Activated CD4-positive, alpha-beta memory T cell treated with anti-CD3 and anti-CD28 coated beads for 36 hours (primary cell): ENCODE measurements at regions of chr6 and their contacts with region 1.

Region 1: DNA sequence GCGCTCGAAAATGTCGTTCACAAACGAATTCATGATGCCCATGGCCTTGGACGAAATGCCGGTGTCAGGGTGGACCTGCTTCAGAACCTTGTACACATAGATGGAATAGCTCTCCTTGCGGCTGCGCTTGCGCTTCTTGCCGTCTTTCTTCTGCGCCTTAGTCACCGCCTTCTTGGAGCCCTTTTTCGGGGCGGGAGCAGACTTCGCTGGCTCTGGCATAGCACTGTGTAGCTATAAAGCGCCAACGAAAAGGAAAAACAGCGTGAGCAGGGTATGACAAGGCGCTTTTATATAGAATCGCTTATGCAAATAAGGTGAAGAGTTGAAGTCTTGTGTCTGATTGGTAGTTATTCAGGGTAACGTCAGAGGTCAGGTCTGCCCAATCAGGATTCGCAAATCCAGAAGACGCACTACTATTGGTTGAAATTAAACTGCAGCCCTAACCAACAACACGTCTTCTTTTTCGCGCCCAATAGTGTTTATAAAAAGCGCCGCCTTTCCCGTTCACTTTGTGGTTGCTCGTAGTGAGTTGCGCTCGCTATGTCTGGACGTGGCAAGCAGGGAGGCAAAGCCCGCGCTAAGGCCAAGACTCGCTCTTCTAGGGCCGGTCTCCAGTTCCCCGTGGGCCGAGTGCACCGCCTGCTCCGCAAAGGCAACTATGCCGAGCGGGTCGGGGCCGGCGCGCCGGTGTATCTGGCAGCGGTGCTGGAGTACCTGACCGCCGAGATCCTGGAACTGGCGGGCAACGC is 114.8 kb upstream of the PRSS16 start:
- DNase-seq: peak; percentile 95
- H3K4me3 Mint-ChIP-seq: no peak overlapping the region
- H3K27ac Mint-ChIP-seq: no peak overlapping the region
- H3K4me1 Mint-ChIP-seq: peaks cover 16% of the 10 kb centered on the region
- H3K27me3 Mint-ChIP-seq: peaks cover 2% of the 10 kb centered on the region

Region 2: DNA sequence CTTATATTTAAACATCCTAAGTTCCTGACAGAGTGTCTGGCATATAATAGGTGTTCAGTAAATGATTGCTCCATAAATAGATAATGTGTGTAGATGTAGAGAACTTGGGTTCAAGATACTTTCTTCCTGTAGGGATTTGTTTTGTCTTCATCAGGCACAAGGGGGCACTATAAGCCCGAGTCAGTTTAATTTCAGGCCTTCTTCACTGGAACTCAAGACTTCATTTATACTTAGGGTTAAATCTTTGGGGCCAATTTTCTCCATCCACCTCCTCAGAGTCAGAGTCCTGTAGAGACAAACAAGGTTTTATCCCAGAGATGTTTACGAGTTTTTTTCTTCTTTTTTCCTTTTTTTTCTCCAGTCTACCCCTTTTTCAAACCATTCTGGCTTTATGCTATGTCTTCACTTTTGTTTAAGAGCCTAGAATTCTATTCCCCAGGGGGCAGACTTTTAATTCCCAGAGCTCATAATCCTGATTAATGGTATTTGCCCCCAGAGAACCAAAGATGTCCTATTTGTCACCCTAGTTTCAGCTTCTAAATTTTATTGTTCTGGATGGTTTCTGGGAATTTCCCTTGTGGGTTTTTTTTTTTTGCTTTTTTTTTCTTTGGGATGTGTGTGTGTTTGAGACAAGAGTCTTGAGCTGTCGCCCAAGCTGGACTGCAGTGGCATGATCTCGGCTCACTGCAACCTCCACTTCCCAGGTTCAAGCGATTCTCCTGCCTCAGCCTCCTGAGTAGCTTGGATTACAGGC is 957.1 kb before region 1 on chr6:
- CTCF ChIA-PET with region 1: no interaction called
- POLR2A ChIA-PET with region 1: no interaction called
- intact Hi-C with region 1: loop called (anchors 5 kb)
- DNase-seq: peak; percentile 63
- H3K4me3 Mint-ChIP-seq: peak overlapping the region; percentile 24
- H3K27ac Mint-ChIP-seq: peak overlapping the region; percentile 43
- H3K4me1 Mint-ChIP-seq: peaks cover 31% of the 10 kb centered on the region
- H3K27me3 Mint-ChIP-seq: no peaks in the 10 kb centered on the region

Region 3: GRCh38 chr6:26234421-26235296 is 898.0 kb before region 1 on chr6:
- CTCF ChIA-PET with region 1: no interaction called
- POLR2A ChIA-PET with region 1: interaction called, 29 read pairs
- intact Hi-C with region 1: no loop called
- DNase-seq: peak; percentile 85
- H3K4me3 Mint-ChIP-seq: peak overlapping the region; percentile 82
- H3K27ac Mint-ChIP-seq: peak overlapping the region; percentile 99
- H3K4me1 Mint-ChIP-seq: peaks cover 29% of the 10 kb centered on the region
- H3K27me3 Mint-ChIP-seq: peaks cover 12% of the 10 kb centered on the region

Region 4: GRCh38 chr6:26607434-26608230 is 525.1 kb before region 1 on chr6:
- CTCF ChIA-PET with region 1: no interaction called
- POLR2A ChIA-PET with region 1: no interaction called
- intact Hi-C with region 1: loop called (anchors 2 kb)
- DNase-seq: peak; percentile 73
- H3K4me3 Mint-ChIP-seq: peak overlapping the region; percentile 50
- H3K27ac Mint-ChIP-seq: peak overlapping the region; percentile 16
- H3K4me1 Mint-ChIP-seq: peaks cover 21% of the 10 kb centered on the region
- H3K27me3 Mint-ChIP-seq: no peaks in the 10 kb centered on the region

Region 5: GRCh38 chr6:27078734-27079357 is 53.9 kb before region 1 on chr6:
- CTCF ChIA-PET with region 1: no interaction called
- POLR2A ChIA-PET with region 1: no interaction called
- intact Hi-C with region 1: no loop called
- DNase-seq: peak; percentile 60
- H3K4me3 Mint-ChIP-seq: peak overlapping the region; percentile 62
- H3K27ac Mint-ChIP-seq: no peak overlapping the region
- H3K4me1 Mint-ChIP-seq: peaks cover 3% of the 10 kb centered on the region
- H3K27me3 Mint-ChIP-seq: peaks cover 27% of the 10 kb centered on the region

Region 6: DNA sequence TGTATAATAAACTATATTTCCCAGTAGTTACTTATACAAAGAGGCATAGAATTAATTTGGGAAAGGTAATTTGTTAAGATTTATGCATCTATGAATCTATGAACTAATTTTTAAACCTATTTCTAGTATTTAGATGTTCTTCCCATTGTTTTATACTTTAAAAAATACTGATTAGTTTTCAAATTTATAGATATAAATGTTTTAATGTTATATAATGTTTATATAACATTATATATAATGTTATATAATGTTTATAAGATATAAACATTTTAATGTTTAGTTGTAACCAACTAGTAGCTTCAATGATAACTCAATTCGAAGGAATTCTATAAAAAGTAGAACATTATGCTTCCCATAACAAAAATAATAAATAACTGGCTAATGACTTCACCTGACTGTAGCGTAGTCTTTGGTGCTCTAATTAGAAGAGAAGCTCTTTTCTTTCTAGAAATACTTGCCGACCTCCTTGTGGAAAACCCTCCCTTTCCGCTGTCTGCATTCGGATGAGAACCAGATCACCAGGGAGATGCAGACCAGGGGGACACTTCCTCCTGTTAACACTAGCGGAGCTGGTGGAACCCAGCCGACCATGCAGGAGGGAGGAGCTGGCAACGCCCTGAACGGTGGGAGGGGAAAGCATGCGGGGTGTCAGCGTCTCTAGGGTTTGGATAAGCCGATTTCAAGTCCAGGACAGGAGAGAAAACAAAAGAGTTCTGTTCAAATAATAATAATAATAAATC is 621.1 kb after region 1 on chr6:
- CTCF ChIA-PET with region 1: no interaction called
- POLR2A ChIA-PET with region 1: interaction called, 4 read pairs
- intact Hi-C with region 1: loop called (anchors 2 kb)
- DNase-seq: peak; percentile 87
- H3K4me3 Mint-ChIP-seq: peak overlapping the region; percentile 83
- H3K27ac Mint-ChIP-seq: peak overlapping the region; percentile 69
- H3K4me1 Mint-ChIP-seq: peaks cover 33% of the 10 kb centered on the region
- H3K27me3 Mint-ChIP-seq: peaks cover 3% of the 10 kb centered on the region

Region 7: DNA sequence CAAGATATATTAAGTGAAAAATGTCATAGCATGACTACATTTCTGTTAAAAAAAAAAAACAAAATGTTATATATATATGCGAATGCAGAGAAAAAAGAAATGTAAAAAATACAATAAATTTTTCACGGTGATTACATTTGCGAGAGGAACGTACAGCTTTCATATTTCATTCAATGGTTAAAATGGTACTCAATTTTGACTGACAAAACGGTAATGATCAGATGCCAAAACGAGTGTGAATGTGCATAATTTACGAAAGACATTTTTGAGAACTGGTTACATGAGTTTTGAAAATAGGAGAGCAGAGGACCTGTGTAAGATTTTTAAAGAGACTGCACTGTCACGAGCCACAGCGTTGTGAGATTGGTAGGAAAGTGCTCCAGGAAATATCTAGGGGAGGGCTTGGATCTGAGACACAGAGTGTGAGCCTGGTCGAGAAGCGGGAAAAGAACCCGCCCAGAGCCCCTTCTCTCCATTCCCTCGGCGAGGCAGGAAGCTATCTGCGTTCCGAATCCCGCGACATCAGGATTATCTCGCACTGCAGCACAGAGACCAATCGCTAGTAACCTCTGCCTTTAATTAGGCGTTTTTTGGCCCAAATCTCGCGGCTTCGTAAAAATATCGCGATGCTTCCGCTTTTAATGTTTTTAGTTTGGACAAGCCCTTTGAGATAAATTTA is 1762.6 kb after region 1 on chr6:
- CTCF ChIA-PET with region 1: no interaction called
- POLR2A ChIA-PET with region 1: no interaction called
- intact Hi-C with region 1: loop called (anchors 10 kb)
- DNase-seq: peak; percentile 95
- H3K4me3 Mint-ChIP-seq: peak overlapping the region; percentile 86
- H3K27ac Mint-ChIP-seq: peak overlapping the region; percentile 97
- H3K4me1 Mint-ChIP-seq: peaks cover 12% of the 10 kb centered on the region
- H3K27me3 Mint-ChIP-seq: peaks cover 2% of the 10 kb centered on the region